Mammary epithelial cell (primary cell): ENCODE measurements at regions of chr18 and their contacts with region 1.

Region 1: DNA sequence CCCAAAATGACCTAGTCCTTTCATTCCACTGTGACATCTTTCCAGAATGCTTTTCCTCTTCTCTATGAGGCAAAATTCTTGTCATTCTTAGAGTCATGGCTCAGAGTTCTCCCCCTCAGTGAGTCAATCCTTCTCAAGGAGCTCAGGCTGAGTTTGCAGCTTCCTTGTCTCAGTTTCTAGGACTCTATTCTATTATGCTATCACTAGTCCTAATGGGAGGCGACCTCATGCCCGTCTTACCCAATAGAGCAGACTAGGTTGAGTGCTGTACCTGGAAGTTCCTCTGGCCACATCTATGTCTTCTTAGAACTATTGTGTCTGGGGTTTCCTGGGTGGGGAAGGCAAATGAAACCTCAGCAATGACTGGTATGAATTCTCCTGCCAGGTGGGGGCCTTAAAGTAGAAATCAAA is 51.5 kb downstream of the HAUS1 start:
- DNase-seq: peak; percentile 88
- H3K4me3 ChIP-seq: no peak overlapping the region
- H3K27ac ChIP-seq: peak overlapping the region; percentile 78
- H3K4me1 ChIP-seq: peaks cover 73% of the 10 kb centered on the region
- H3K27me3 ChIP-seq: no peaks in the 10 kb centered on the region
- CTCF ChIP-seq: no peak

Region 2: GRCh38 chr18:46213295-46213694 is 57.6 kb after region 1 on chr18:
- CTCF ChIA-PET with region 1: no interaction called
- dilution Hi-C with region 1: loop called (anchors 5 kb)
- in situ Hi-C with region 1: no loop called
- intact Hi-C with region 1: no loop called
- DNase-seq: no peak
- H3K4me3 ChIP-seq: no peak overlapping the region
- H3K27ac ChIP-seq: no peak overlapping the region
- H3K4me1 ChIP-seq: peaks cover 9% of the 10 kb centered on the region
- H3K27me3 ChIP-seq: no peaks in the 10 kb centered on the region
- CTCF ChIP-seq: peak; percentile 49 to 59

Region 3: GRCh38 chr18:46243095-46243494 is 87.4 kb after region 1 on chr18:
- CTCF ChIA-PET with region 1: no interaction called
- dilution Hi-C with region 1: no loop called
- in situ Hi-C with region 1: no loop called
- intact Hi-C with region 1: no loop called
- DNase-seq: no peak
- H3K4me3 ChIP-seq: no peak overlapping the region
- H3K27ac ChIP-seq: no peak overlapping the region
- H3K4me1 ChIP-seq: peaks cover 3% of the 10 kb centered on the region
- H3K27me3 ChIP-seq: no peaks in the 10 kb centered on the region
- CTCF ChIP-seq: no peak

Region 4: DNA sequence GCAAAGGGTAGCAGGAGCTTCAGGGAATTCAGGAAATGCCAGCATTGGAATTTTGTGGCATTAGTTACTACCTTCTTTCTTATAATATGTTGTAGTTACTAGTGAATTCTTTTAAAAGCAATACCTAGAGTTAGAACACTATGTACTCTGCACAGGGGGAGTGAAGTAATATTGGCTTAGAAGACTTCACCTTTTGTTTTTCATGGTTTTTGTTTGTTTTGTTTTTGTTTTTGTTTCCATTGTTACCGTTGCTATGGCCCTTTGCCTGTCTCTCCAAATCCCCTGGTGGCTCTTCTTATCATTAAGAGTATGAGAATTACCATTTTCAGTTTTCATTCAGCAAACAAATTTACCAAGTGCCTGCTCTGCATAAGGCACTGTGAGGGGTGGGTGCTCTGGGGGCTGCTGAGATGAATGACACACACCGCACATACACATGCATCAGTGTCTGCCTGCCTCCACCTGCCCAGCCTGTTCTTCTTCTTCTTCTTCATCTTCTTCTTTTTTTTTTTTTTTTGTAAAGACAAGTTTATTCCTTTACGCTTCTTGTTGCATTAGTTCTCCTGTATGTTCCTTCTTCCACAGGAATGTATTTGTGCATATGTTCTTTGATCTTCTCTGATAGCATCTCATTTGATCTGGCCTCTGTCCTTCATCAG is 108.7 kb after region 1 on chr18:
- CTCF ChIA-PET with region 1: no interaction called
- dilution Hi-C with region 1: no loop called
- in situ Hi-C with region 1: no loop called
- intact Hi-C with region 1: loop called (anchors 5 kb)
- DNase-seq: peak; percentile 54
- H3K4me3 ChIP-seq: no peak overlapping the region
- H3K27ac ChIP-seq: peak overlapping the region; percentile 62
- H3K4me1 ChIP-seq: peaks cover 47% of the 10 kb centered on the region
- H3K27me3 ChIP-seq: no peaks in the 10 kb centered on the region
- CTCF ChIP-seq: no peak

Region 5: GRCh38 chr18:46324087-46324958 is 168.7 kb after region 1 on chr18:
- CTCF ChIA-PET with region 1: no interaction called
- dilution Hi-C with region 1: no loop called
- in situ Hi-C with region 1: no loop called
- intact Hi-C with region 1: loop called (anchors 5 kb)
- DNase-seq: peak; percentile 69
- H3K4me3 ChIP-seq: no peak overlapping the region
- H3K27ac ChIP-seq: peak overlapping the region; percentile 8
- H3K4me1 ChIP-seq: peaks cover 48% of the 10 kb centered on the region
- H3K27me3 ChIP-seq: no peaks in the 10 kb centered on the region
- CTCF ChIP-seq: no peak

Region 6: DNA sequence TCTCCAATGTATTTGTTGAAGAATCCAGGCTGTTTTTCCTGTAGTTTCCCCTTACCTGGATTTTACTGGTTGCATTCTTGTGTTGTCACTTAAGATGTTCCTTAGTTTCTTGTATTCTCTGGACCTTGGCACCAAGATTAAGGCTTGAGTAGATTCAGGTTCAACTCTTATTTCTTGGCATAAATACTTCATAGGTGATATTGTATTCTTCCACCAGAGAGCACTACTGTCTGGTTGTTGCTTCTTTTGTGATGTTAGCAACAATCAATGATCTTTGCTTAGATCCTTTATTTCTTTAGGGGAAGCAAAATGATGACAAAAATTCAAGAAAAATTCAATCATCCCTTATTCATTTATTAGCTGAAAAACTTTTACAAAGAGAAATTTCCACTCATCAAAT is 290.3 kb after region 1 on chr18:
- CTCF ChIA-PET with region 1: no interaction called
- dilution Hi-C with region 1: no loop called
- in situ Hi-C with region 1: no loop called
- intact Hi-C with region 1: loop called (anchors 5 kb)
- DNase-seq: no peak
- H3K4me3 ChIP-seq: no peak overlapping the region
- H3K27ac ChIP-seq: no peak overlapping the region
- H3K4me1 ChIP-seq: no peaks in the 10 kb centered on the region
- H3K27me3 ChIP-seq: no peaks in the 10 kb centered on the region
- CTCF ChIP-seq: peak in 1 of 2 donors; percentile 30